Pancreas (tissue), 10 donors: ENCODE measurements at regions of chr9 and their contacts with region 1.

Region 1: GRCh38 chr9:127347831-127348779 is 48.9 kb upstream of the SLC2A8 start:
- DNase-seq: peak in 1 of 6 donors; percentile 24
- ATAC-seq: peak; percentile 77 to 96 (median 89)
- H3K4me3 ChIP-seq: no peak overlapping the region
- H3K27ac ChIP-seq: no peak overlapping the region
- H3K4me1 ChIP-seq: peaks cover 0 to 4% (median 0%) of the 10 kb centered on the region in 3 donors
- H3K27me3 ChIP-seq: no peaks in the 10 kb centered on the region
- CTCF ChIP-seq: peak in 2 of 4 donors; percentile 28 to 33

Region 2: GRCh38 chr9:127214421-127215267 is 133.5 kb before region 1 on chr9:
- intact Hi-C with region 1: loop called in 1 of 3 experiments (anchors 10 kb)
- DNase-seq: peak; percentile 52 to 79 (median 70)
- ATAC-seq: peak; percentile 82 to 94 (median 90)
- H3K4me3 ChIP-seq: no peak overlapping the region
- H3K27ac ChIP-seq: no peak overlapping the region
- H3K4me1 ChIP-seq: no peaks in the 10 kb centered on the region
- H3K27me3 ChIP-seq: no peaks in the 10 kb centered on the region
- CTCF ChIP-seq: peak; percentile 47 to 72 (median 65)

Region 3: DNA sequence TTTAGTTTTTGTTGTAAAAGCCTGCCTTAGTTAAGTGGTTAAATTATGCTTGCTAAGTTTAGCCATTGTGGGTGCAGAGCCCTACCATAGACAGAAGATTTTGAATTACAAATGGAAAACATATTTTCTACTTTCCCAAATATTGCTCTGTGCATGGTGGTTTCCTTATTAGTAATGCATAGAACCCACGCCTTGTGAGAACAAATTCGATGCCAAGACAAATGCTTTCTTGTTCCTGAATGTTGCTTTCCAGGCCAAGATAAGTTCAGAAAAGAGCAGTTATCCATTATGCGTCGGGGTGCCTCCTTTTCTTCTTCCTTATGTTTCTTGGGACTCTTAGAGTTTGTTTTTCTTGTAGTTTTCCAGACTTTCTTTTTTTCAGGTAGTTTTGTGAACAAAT is 114.6 kb before region 1 on chr9:
- intact Hi-C with region 1: loop called in 1 of 3 experiments (anchors 10 kb)
- DNase-seq: no peak
- ATAC-seq: no peak
- H3K4me3 ChIP-seq: no peak overlapping the region
- H3K27ac ChIP-seq: no peak overlapping the region
- H3K4me1 ChIP-seq: no peaks in the 10 kb centered on the region
- H3K27me3 ChIP-seq: no peaks in the 10 kb centered on the region
- CTCF ChIP-seq: no peak

Region 4: DNA sequence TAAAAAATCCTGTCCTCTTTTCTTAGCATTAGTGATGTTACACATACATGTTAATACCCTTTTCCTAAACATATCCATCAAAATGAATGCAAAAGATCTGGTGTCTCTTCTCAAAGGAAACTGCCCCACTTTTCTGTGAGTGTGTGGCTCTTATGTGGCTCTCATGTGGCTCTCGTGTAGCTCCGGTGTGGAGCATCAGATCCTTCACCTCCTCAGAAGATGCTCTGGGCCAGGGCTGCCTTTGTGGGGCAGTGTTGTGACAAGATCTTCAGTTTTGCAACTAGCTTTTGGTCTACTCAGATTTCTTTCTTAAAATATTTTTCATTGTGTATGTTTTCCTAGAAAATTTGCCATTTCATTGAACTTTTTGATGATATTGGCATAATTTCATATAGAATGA is 64.2 kb before region 1 on chr9:
- intact Hi-C with region 1: no loop called
- DNase-seq: no peak
- ATAC-seq: no peak
- H3K4me3 ChIP-seq: no peak overlapping the region
- H3K27ac ChIP-seq: no peak overlapping the region
- H3K4me1 ChIP-seq: peaks cover 0 to 9% (median 0%) of the 10 kb centered on the region in 3 donors
- H3K27me3 ChIP-seq: no peaks in the 10 kb centered on the region
- CTCF ChIP-seq: no peak